ENCODE measurements at regions of chr14 and their contacts with region 1.

Region 1: DNA sequence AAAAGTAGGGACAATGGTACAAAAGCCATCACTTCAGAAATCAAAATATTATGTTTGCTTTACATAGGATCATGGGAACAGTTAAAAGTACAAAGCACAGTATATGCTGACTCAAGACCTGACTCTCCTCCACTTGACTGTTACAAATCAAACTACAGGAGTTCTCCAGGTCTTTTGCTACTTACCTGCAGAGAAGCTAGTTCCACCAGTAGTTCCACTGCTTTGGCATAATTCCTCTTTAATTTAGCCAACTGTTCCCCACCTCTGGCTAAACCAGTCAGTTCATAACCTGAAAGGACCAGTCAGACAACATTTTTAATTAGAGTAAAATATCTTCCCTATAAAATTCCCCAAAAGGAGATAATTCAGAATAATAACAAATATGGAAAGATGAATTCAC is 14.0 kb downstream of the ATP6V1D start:
- DNase-seq: no peak
- ATAC-seq: no peak
- H3K4me3 ChIP-seq: no peak overlapping the region
- H3K27ac ChIP-seq: no peak overlapping the region
- H3K4me1 ChIP-seq: no peaks in the 10 kb centered on the region
- H3K27me3 ChIP-seq: no peaks in the 10 kb centered on the region
- CTCF ChIP-seq: no peak
- POLR2A ChIP-seq: no peak
- RAD21 ChIP-seq: no peak

Region 2: GRCh38 chr14:66507722-66508546 is 837.6 kb before region 1 on chr14 and contains the start of gene GPHN:
- CTCF ChIA-PET with region 1: no interaction called
- POLR2A ChIA-PET with region 1: no interaction called
- dilution Hi-C with region 1: no loop called
- in situ Hi-C with region 1: no loop called
- intact Hi-C with region 1: loop called (anchors 5 kb)
- DNase-seq: peak; percentile 97
- ATAC-seq: peak; percentile 97
- H3K4me3 ChIP-seq: peak within 1 kb of the TSS; percentile 96
- H3K27ac ChIP-seq: peak within 1 kb of the TSS; percentile 34
- H3K4me1 ChIP-seq: no peaks in the 10 kb centered on the region
- H3K27me3 ChIP-seq: no peaks in the 10 kb centered on the region
- CTCF ChIP-seq: peak; percentile 25; the same call in 1 of the 2 replicates
- POLR2A ChIP-seq: no peak; the same call in 1 of the 2 replicates
- RAD21 ChIP-seq: no peak
- total RNA-seq, gene GPHN: 7.2 and 8.1 TPM in 2 replicates

Region 3: GRCh38 chr14:67228325-67228984 is 117.1 kb before region 1 on chr14:
- CTCF ChIA-PET with region 1: no interaction called
- POLR2A ChIA-PET with region 1: no interaction called
- dilution Hi-C with region 1: no loop called
- in situ Hi-C with region 1: no loop called
- intact Hi-C with region 1: no loop called
- DNase-seq: peak; percentile 45
- ATAC-seq: no peak
- H3K4me3 ChIP-seq: peak overlapping the region; percentile 2; the same call in 1 of the 2 replicates
- H3K27ac ChIP-seq: no peak overlapping the region
- H3K4me1 ChIP-seq: no peaks in the 10 kb centered on the region
- H3K27me3 ChIP-seq: no peaks in the 10 kb centered on the region
- CTCF ChIP-seq: no peak
- POLR2A ChIP-seq: no peak
- RAD21 ChIP-seq: no peak

Measured in IMR-90 (cell line).